HEK293 (cell line): ENCODE measurements at regions of chr14 and their contacts with region 1.

Region 1: GRCh38 chr14:68979021-68979782 is at the start of gene ACTN1:
- H3K4me3 ChIP-seq: peak within 1 kb of the TSS; percentile 96
- H3K27ac ChIP-seq: peak within 1 kb of the TSS; percentile 95
- H3K4me1 ChIP-seq: peaks cover 10% of the 10 kb centered on the region
- CTCF ChIP-seq: no peak

Region 2: GRCh38 chr14:68939893-68940613 is 39.1 kb before region 1 on chr14:
- CTCF ChIA-PET with region 1: interaction called, 5 read pairs
- POLR2A ChIA-PET with region 1: interaction called, 16 read pairs
- H3K4me3 ChIP-seq: no peak overlapping the region
- H3K27ac ChIP-seq: peak overlapping the region; percentile 29; the same call in 1 of the 2 replicates
- H3K4me1 ChIP-seq: peaks cover 11% of the 10 kb centered on the region
- CTCF ChIP-seq: no peak

Region 3: GRCh38 chr14:68947802-68948201 is 31.4 kb before region 1 on chr14:
- CTCF ChIA-PET with region 1: no interaction called
- POLR2A ChIA-PET with region 1: interaction called, 10 read pairs
- H3K4me3 ChIP-seq: no peak overlapping the region
- H3K27ac ChIP-seq: no peak overlapping the region
- H3K4me1 ChIP-seq: peaks cover 11% of the 10 kb centered on the region
- CTCF ChIP-seq: no peak

Region 4: DNA sequence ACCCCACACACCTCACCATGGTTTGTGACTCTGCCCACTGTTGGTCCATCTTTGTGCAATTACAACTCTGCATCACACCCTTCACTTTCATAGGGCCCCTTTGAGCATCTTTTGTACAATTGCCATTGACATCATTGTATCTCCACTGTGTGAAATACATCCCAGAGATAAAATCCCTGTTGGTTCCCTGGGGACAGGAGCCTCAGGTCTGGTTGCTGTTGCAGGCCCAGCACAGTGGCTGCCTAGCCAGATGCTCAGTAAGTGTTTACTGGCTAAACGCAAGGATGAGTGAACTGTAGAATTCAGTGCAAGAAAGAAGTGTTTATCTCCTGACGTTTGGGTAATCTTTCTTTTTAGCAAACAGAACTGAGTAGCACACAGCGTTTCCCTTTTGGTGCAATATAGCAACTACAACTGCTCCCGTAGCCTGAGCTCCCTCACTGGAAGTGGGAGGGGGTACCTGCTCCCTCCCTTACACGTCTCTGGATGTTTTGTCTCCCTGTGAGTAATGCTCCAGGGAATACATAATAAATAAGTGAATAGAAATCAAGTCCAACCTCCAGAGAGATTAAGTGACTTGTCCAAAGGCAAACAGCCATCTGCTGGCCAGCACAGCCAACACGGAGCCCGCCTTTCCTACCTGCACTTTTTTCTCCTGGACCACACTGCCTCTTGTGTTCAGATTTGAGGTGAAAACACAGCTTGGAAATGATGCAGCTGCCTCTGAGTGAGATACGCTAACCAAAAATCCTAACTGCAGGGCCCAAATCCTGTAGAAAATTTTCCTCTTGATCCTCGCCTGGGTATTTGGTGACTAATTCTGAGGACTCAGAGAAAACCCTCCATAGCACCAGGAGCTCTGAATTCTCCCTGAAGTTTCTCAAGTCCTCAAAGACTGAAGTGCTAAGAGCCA is 308.2 kb after region 1 on chr14:
- CTCF ChIA-PET with region 1: no interaction called
- POLR2A ChIA-PET with region 1: no interaction called
- H3K4me3 ChIP-seq: no peak overlapping the region
- H3K27ac ChIP-seq: no peak overlapping the region
- H3K4me1 ChIP-seq: no peaks in the 10 kb centered on the region
- CTCF ChIP-seq: no peak